WTC11 (cell line): ENCODE measurements at regions of chr1 and their contacts with region 1.

Region 1: GRCh38 chr1:181152892-181153633 is 64.6 kb downstream of the IER5 start:
- DNase-seq: peak; percentile 34
- ATAC-seq: peak; percentile 88
- H3K4me3 Mint-ChIP-seq: no peak overlapping the region
- H3K27ac Mint-ChIP-seq: 0 out of 2 replicates have a peak overlapping the region, but pooled peaks have one; percentile 44
- H3K4me1 Mint-ChIP-seq: peaks cover 20% of the 10 kb centered on the region
- H3K27me3 Mint-ChIP-seq: no peaks in the 10 kb centered on the region; the same call in 1 of the 2 replicates
- CTCF ChIP-seq: no peak

Region 2: DNA sequence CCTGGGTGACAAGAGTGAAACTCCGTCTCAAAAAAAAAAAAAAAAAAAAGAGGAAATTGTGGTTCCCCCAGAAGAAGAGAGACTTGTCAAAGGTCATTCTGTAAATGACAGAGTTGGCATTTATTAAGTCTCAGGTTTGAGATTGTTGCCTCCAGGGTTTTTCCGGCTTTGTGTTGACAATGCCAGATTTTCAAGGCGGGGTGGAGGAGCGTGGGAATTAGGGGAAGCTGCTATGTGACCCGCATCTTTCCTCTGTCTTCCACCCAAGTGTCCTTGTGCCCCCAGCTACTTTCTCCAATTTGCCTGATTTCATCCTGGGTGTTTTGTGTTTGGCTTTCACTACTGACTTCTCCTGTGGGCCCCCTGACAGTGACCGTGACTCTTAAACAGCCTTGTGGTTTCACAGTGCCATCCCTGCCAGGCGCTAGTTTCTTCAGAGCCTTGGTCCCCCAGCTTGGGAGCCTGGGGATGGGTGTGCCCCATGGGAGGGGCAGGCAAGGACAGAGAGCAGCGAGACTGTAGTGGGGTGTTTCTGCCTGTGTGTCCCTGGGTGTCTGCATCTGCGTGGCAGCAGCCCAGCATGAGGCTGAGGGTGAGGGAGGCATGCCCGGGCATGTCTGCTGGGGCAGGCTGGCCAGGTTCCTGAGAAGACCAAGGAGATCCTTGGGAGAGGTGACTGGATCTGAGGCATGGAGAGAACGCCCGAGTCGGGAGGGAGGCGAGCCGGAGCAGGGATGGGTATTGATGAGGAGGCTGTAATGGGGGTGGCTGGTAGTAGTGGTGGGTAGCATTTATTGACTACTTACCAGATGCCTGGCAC is 18.3 kb before region 1 on chr1:
- CTCF ChIA-PET with region 1: interaction called, 12 read pairs
- POLR2A ChIA-PET with region 1: no interaction called
- DNase-seq: no peak
- ATAC-seq: no peak
- H3K4me3 Mint-ChIP-seq: no peak overlapping the region
- H3K27ac Mint-ChIP-seq: peak overlapping the region; percentile 77
- H3K4me1 Mint-ChIP-seq: peaks cover 57% of the 10 kb centered on the region
- H3K27me3 Mint-ChIP-seq: peaks cover 8% of the 10 kb centered on the region; the same call in 1 of the 2 replicates
- CTCF ChIP-seq: no peak

Region 3: GRCh38 chr1:181166377-181167196 is 13.5 kb after region 1 on chr1:
- CTCF ChIA-PET with region 1: interaction called, 10 read pairs
- POLR2A ChIA-PET with region 1: no interaction called
- DNase-seq: peak; percentile 80
- ATAC-seq: peak; percentile 99
- H3K4me3 Mint-ChIP-seq: no peak overlapping the region
- H3K27ac Mint-ChIP-seq: no peak overlapping the region
- H3K4me1 Mint-ChIP-seq: peaks cover 4% of the 10 kb centered on the region
- H3K27me3 Mint-ChIP-seq: peaks cover 6% of the 10 kb centered on the region
- CTCF ChIP-seq: peak; percentile 63; the same call in 1 of the 2 replicates